B cell (primary cell): ENCODE measurements at regions of chr1 and their contacts with region 1.

Region 1: GRCh38 chr1:198465201-198466144 is 75.0 kb downstream of the ATP6V1G3 start:
- DNase-seq: peak; percentile 58
- ATAC-seq: no peak
- H3K4me3 ChIP-seq: no peak overlapping the region
- H3K4me3 Mint-ChIP-seq: no peak overlapping the region
- H3K27ac ChIP-seq: no peak overlapping the region
- H3K27ac Mint-ChIP-seq: no peak overlapping the region
- H3K4me1 ChIP-seq: no peaks in the 10 kb centered on the region
- H3K4me1 Mint-ChIP-seq: no peaks in the 10 kb centered on the region
- H3K27me3 ChIP-seq: no peaks in the 10 kb centered on the region
- H3K27me3 Mint-ChIP-seq: no peaks in the 10 kb centered on the region
- CTCF ChIP-seq: peak; percentile 78

Region 2: DNA sequence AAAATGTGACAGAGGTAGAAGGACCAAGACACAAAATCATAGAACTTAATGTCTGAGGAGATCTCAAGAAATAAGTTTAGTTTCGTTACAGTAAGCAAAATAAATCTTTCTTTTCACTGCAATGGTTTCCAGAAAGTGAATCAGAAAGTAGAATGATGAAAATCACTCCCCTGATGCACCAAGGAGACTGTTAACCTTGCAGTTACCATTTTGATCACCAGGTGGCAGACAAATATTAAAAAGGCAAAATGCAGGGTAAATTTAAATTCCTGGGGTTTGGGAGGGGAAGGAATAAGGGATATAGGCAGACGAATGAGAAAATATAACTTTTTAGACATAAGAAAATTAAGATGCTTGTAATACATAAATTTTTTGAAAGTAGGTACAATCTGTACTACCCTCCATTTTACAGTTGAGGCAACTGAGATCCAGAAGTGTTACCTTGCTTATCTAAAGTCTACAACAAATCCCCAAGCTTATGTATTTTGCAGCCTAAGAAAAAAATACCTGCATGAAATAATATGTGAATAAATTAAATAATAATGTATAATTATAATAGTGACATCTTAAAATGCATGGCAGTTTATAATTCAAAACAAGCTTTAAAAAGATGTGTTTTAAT is 944.2 kb before region 1 on chr1:
- CTCF ChIA-PET with region 1: interaction called, 5 read pairs
- POLR2A ChIA-PET with region 1: no interaction called
- intact Hi-C with region 1: loop called (anchors 2 kb)
- DNase-seq: peak; percentile 54
- ATAC-seq: peak; percentile 49
- H3K4me3 ChIP-seq: no peak overlapping the region
- H3K4me3 Mint-ChIP-seq: no peak overlapping the region
- H3K27ac ChIP-seq: no peak overlapping the region
- H3K27ac Mint-ChIP-seq: no peak overlapping the region
- H3K4me1 ChIP-seq: no peaks in the 10 kb centered on the region
- H3K4me1 Mint-ChIP-seq: no peaks in the 10 kb centered on the region
- H3K27me3 ChIP-seq: no peaks in the 10 kb centered on the region
- H3K27me3 Mint-ChIP-seq: no peaks in the 10 kb centered on the region
- CTCF ChIP-seq: peak; percentile 84

Region 3: GRCh38 chr1:197614916-197615692 is 850.4 kb before region 1 on chr1:
- CTCF ChIA-PET with region 1: interaction called, 10 read pairs
- POLR2A ChIA-PET with region 1: no interaction called
- intact Hi-C with region 1: loop called (anchors 5 kb)
- DNase-seq: peak; percentile 42
- ATAC-seq: peak; percentile 49
- H3K4me3 ChIP-seq: no peak overlapping the region
- H3K4me3 Mint-ChIP-seq: no peak overlapping the region
- H3K27ac ChIP-seq: no peak overlapping the region
- H3K27ac Mint-ChIP-seq: no peak overlapping the region
- H3K4me1 ChIP-seq: no peaks in the 10 kb centered on the region
- H3K4me1 Mint-ChIP-seq: no peaks in the 10 kb centered on the region
- H3K27me3 ChIP-seq: no peaks in the 10 kb centered on the region
- H3K27me3 Mint-ChIP-seq: no peaks in the 10 kb centered on the region
- CTCF ChIP-seq: peak; percentile 70

Region 4: GRCh38 chr1:197924516-197925123 is 540.9 kb before region 1 on chr1:
- CTCF ChIA-PET with region 1: no interaction called
- POLR2A ChIA-PET with region 1: no interaction called
- intact Hi-C with region 1: loop called (anchors 1 kb)
- DNase-seq: peak; percentile 66
- ATAC-seq: peak; percentile 70
- H3K4me3 ChIP-seq: no peak overlapping the region
- H3K4me3 Mint-ChIP-seq: no peak overlapping the region
- H3K27ac ChIP-seq: no peak overlapping the region
- H3K27ac Mint-ChIP-seq: no peak overlapping the region
- H3K4me1 ChIP-seq: peaks cover 23% of the 10 kb centered on the region in 2 donors
- H3K4me1 Mint-ChIP-seq: peaks cover 15% of the 10 kb centered on the region
- H3K27me3 ChIP-seq: peaks cover 0 to 60% (median 51%) of the 10 kb centered on the region in 4 experiments
- H3K27me3 Mint-ChIP-seq: peaks cover 79% of the 10 kb centered on the region
- CTCF ChIP-seq: peak; percentile 83

Region 5: DNA sequence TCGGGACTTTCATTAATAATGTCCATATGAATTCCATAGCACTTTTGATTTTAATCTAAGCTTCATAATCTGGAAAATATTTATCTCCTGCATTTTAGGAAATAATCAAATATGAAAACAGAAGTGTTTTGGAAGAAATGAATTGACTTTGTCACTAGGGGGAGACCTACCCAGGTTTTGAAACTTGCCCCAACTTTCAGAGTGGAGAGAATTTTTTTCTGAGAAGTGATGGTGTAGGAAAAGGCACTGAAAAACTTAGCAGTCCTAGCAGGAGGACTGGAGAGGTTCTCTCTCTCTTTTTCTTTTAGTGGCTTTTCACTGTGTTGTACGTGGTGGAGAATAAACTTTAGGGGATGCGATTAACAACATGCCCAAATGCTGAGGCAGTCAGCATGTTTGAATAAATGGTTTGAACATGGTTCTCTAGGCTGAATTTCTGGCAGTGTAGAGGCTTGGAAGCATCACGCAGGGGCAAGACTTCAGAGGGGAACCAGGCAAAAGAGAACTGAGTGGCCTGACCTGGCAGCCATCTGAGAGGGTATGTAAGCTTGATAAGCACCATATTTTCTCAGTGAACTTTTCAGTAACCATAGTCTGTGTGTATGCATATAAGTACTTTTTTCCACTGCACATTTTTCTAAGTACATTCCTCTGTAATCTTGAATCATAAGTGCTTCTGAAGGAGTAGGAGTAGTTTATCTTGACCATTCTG is 377.0 kb before region 1 on chr1:
- CTCF ChIA-PET with region 1: interaction called, 12 read pairs
- POLR2A ChIA-PET with region 1: no interaction called
- intact Hi-C with region 1: loop called (anchors 1 kb)
- DNase-seq: peak; percentile 38
- ATAC-seq: no peak
- H3K4me3 ChIP-seq: no peak overlapping the region
- H3K4me3 Mint-ChIP-seq: no peak overlapping the region
- H3K27ac ChIP-seq: no peak overlapping the region
- H3K27ac Mint-ChIP-seq: no peak overlapping the region
- H3K4me1 ChIP-seq: no peaks in the 10 kb centered on the region
- H3K4me1 Mint-ChIP-seq: no peaks in the 10 kb centered on the region
- H3K27me3 ChIP-seq: no peaks in the 10 kb centered on the region
- H3K27me3 Mint-ChIP-seq: peaks cover 13% of the 10 kb centered on the region
- CTCF ChIP-seq: peak; percentile 79

Region 6: DNA sequence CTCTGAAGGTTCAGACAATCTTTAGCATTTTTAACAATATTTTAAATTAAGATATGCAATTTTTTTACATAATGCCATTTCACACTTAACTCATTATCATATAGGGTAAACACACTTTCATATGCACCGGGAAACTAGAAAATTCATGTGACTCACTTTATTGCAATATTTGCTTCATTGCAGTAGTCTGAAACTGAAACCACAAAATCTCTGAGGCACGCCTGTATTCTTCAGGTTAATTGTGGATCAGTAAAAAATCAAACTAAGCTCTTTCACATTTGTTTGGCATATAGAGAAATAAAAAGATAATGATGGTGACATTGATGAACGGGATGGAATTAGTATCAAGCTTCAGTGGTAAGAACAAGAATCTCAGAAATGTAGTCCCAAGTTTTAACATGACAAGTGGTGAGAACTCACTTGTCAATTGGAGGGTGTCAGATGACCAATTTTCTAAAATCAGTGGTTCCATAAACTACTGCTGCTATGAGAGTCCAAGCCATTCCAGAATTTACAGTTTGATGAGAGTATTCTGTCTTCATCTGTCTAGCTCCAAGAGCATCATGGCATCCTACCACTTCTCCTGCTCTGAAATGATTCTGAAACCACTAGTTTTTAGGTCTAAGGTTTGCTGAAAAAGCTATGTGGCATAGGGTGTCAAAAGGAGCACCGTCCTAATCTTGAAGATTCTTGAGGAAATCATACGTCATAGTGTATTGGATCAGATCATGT is 454.4 kb after region 1 on chr1:
- CTCF ChIA-PET with region 1: no interaction called
- POLR2A ChIA-PET with region 1: no interaction called
- intact Hi-C with region 1: no loop called
- DNase-seq: peak; percentile 32
- ATAC-seq: no peak
- H3K4me3 ChIP-seq: peak overlapping the region in 2 of 5 experiments; percentile 8 to 33
- H3K4me3 Mint-ChIP-seq: peak overlapping the region; percentile 88
- H3K27ac ChIP-seq: no peak overlapping the region
- H3K27ac Mint-ChIP-seq: peak overlapping the region; percentile 72
- H3K4me1 ChIP-seq: peaks cover 18 to 30% of the 10 kb centered on the region in 2 donors
- H3K4me1 Mint-ChIP-seq: peaks cover 53% of the 10 kb centered on the region
- H3K27me3 ChIP-seq: no peaks in the 10 kb centered on the region
- H3K27me3 Mint-ChIP-seq: no peaks in the 10 kb centered on the region
- CTCF ChIP-seq: no peak